Mammary epithelial cell (primary cell): ENCODE measurements at regions of chr7 and their contacts with region 1.

Region 1: GRCh38 chr7:16645593-16646471 is at the starts of genes ANKMY2 and BZW2:
- DNase-seq: peak; percentile 96
- H3K4me3 ChIP-seq: peak within 1 kb of the TSS; percentile 96 to 100 (median 97)
- H3K27ac ChIP-seq: peak within 1 kb of the TSS; percentile 76
- H3K4me1 ChIP-seq: peaks cover 43% of the 10 kb centered on the region
- H3K27me3 ChIP-seq: no peaks in the 10 kb centered on the region
- CTCF ChIP-seq: no peak
- total RNA-seq, gene ANKMY2: 11.0 to 24.3 TPM
- total RNA-seq, gene BZW2: 66.2 to 75.0 TPM

Region 2: DNA sequence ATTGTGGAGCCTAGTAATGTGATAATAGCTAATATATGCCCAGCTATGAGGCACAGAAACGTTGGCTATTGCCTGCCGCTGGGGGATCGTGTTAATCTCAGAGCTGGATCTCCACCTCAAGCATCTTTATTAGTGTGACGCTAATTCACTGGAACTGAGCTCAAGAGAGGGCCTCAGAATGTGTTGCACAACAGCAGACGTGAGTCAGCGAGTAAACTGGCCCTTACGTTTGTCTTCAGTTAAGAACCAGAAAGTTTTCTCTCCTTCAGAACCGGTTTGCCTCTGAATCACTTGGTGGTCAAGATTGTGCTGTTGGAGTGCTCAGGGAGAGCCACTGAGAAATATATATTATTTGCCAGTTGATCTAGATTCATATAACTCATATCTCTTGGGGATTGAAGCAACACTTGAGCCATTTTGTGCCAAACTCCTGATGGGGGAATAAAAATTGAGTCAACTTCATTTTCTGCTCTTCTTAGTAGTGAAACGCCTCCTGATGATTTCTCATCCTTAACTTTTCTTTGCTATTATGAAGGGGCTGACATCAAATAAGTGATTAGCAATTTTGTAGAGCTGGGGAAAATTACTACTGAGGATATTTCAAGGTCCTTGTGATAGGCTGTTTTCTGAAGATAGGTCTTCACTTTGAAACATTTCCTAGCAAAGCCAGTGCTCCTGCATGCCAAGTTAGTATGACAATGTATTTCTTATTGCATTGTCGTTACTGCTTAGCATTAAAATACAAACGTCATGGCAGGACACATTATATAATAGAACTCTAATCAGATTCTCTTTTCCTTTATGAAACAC is 22.4 kb after region 1 on chr7:
- CTCF ChIA-PET with region 1: no interaction called
- dilution Hi-C with region 1: no loop called
- in situ Hi-C with region 1: no loop called
- intact Hi-C with region 1: loop called (anchors 1 kb)
- DNase-seq: peak; percentile 99
- H3K4me3 ChIP-seq: no peak overlapping the region
- H3K27ac ChIP-seq: peak overlapping the region; percentile 55
- H3K4me1 ChIP-seq: peaks cover 29% of the 10 kb centered on the region
- H3K27me3 ChIP-seq: no peaks in the 10 kb centered on the region
- CTCF ChIP-seq: peak; percentile 28 to 39

Region 3: GRCh38 chr7:16688249-16688648 is 42.4 kb after region 1 on chr7:
- CTCF ChIA-PET with region 1: no interaction called
- dilution Hi-C with region 1: no loop called
- in situ Hi-C with region 1: no loop called
- intact Hi-C with region 1: no loop called
- DNase-seq: peak; percentile 39
- H3K4me3 ChIP-seq: no peak overlapping the region
- H3K27ac ChIP-seq: no peak overlapping the region
- H3K4me1 ChIP-seq: no peaks in the 10 kb centered on the region
- H3K27me3 ChIP-seq: no peaks in the 10 kb centered on the region
- CTCF ChIP-seq: no peak

Region 4: GRCh38 chr7:16753102-16753931 is 107.5 kb after region 1 on chr7 and contains the start of gene TSPAN13:
- CTCF ChIA-PET with region 1: no interaction called
- dilution Hi-C with region 1: loop called (anchors 5 kb)
- in situ Hi-C with region 1: no loop called
- intact Hi-C with region 1: loop called (anchors 5 kb)
- DNase-seq: peak; percentile 98
- H3K4me3 ChIP-seq: peak within 1 kb of the TSS; percentile 53 to 88 (median 66)
- H3K27ac ChIP-seq: peak within 1 kb of the TSS; percentile 43
- H3K4me1 ChIP-seq: peaks cover 11% of the 10 kb centered on the region
- H3K27me3 ChIP-seq: no peaks in the 10 kb centered on the region
- CTCF ChIP-seq: no peak
- total RNA-seq, gene TSPAN13: 15.3 to 15.7 TPM